CD4-positive, alpha-beta memory T cell (primary cell): ENCODE measurements at regions of chr10 and their contacts with region 1.

Region 1: GRCh38 chr10:69232252-69232651 is 12.1 kb downstream of the HKDC1 start:
- DNase-seq: no peak
- H3K4me3 ChIP-seq: no peak overlapping the region
- H3K4me3 Mint-ChIP-seq: peak overlapping the region in 5 of 8 donors; percentile 12 to 94 (median 81)
- H3K27ac ChIP-seq: no peak overlapping the region
- H3K27ac Mint-ChIP-seq: peak overlapping the region in 6 of 7 donors; percentile 1 to 93 (median 78)
- H3K4me1 ChIP-seq: peaks cover 55% of the 10 kb centered on the region
- H3K4me1 Mint-ChIP-seq: peaks cover 41 to 71% (median 47%) of the 10 kb centered on the region in 4 donors
- H3K27me3 ChIP-seq: no peaks in the 10 kb centered on the region
- H3K27me3 Mint-ChIP-seq: no peaks in the 10 kb centered on the region

Region 2: GRCh38 chr10:69217119-69217754 is 15.0 kb before region 1 on chr10:
- CTCF ChIA-PET with region 1: interaction called, 7 read pairs
- POLR2A ChIA-PET with region 1: interaction called, 13 read pairs
- intact Hi-C with region 1: loop called (anchors 1 kb)
- DNase-seq: no peak
- H3K4me3 ChIP-seq: no peak overlapping the region
- H3K4me3 Mint-ChIP-seq: no peak overlapping the region
- H3K27ac ChIP-seq: no peak overlapping the region
- H3K27ac Mint-ChIP-seq: peak overlapping the region in 2 of 7 donors; percentile 43 to 80
- H3K4me1 ChIP-seq: peaks cover 32% of the 10 kb centered on the region
- H3K4me1 Mint-ChIP-seq: peaks cover 18 to 52% (median 26%) of the 10 kb centered on the region in 4 donors
- H3K27me3 ChIP-seq: no peaks in the 10 kb centered on the region
- H3K27me3 Mint-ChIP-seq: no peaks in the 10 kb centered on the region

Region 3: GRCh38 chr10:69392481-69393000 is 160.3 kb after region 1 on chr10:
- CTCF ChIA-PET with region 1: interaction called, 148 read pairs
- POLR2A ChIA-PET with region 1: interaction called, 11 read pairs
- intact Hi-C with region 1: loop called (anchors 1 kb)
- DNase-seq: peak; percentile 79 to 81 (median 80)
- H3K4me3 ChIP-seq: no peak overlapping the region
- H3K4me3 Mint-ChIP-seq: no peak overlapping the region
- H3K27ac ChIP-seq: peak overlapping the region; percentile 22
- H3K27ac Mint-ChIP-seq: peak overlapping the region; percentile 41 to 91 (median 79)
- H3K4me1 ChIP-seq: peaks cover 15% of the 10 kb centered on the region
- H3K4me1 Mint-ChIP-seq: peaks cover 7 to 17% (median 11%) of the 10 kb centered on the region in 4 donors
- H3K27me3 ChIP-seq: no peaks in the 10 kb centered on the region
- H3K27me3 Mint-ChIP-seq: no peaks in the 10 kb centered on the region